ENCODE measurements at regions of chr10 and their contacts with region 1.

Region 1: DNA sequence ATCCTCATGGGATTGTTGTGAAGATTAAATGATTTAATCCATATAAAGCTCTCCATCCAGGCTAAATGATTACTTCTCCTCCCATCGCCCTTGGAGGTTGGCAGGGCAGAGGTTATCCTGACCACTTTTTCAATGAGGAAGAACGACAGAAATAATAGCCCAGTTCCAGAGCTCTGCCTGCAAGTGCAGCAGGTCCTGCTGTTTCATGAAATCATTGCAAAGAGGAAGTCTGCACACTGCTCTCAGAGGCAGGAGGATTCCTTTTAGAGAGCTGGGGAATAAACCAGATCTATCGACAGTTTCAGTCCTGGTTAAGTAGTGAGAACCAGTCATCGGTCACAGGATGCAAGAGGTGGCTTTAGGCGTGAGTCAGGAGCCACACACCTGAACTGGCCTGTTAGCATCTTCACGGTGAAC is 25.0 kb upstream of the CDH23 start:
- DNase-seq: no peak
- H3K4me3 ChIP-seq: no peak overlapping the region
- H3K27ac ChIP-seq: no peak overlapping the region
- H3K4me1 ChIP-seq: peaks cover 4 to 19% (median 10%) of the 10 kb centered on the region in 4 donors
- H3K27me3 ChIP-seq: no peaks in the 10 kb centered on the region
- CTCF ChIP-seq: no peak
- EP300 ChIP-seq: no peak
- POLR2A ChIP-seq: no peak

Region 2: GRCh38 chr10:70672165-70673042 is 699.4 kb before region 1 on chr10 and contains the start of gene ADAMTS14:
- intact Hi-C with region 1: no loop called
- DNase-seq: peak in 1 of 2 donors; percentile 83
- H3K4me3 ChIP-seq: peak within 1 kb of the TSS; percentile 41 to 51 (median 46)
- H3K27ac ChIP-seq: peak within 1 kb of the TSS in 4 of 5 donors; percentile 26 to 73 (median 55)
- H3K4me1 ChIP-seq: peaks cover 0 to 29% (median 16%) of the 10 kb centered on the region in 4 donors
- H3K27me3 ChIP-seq: peaks cover 5 to 54% (median 23%) of the 10 kb centered on the region in 3 donors
- CTCF ChIP-seq: no peak
- EP300 ChIP-seq: no peak
- POLR2A ChIP-seq: no peak
- total RNA-seq, gene ADAMTS14: 7.0 to 9.4 (median 7.3) TPM in 3 of 5 donors, not detected in the others

Region 3: GRCh38 chr10:71143610-71144009 is 228.1 kb before region 1 on chr10:
- intact Hi-C with region 1: no loop called
- DNase-seq: no peak
- H3K4me3 ChIP-seq: no peak overlapping the region
- H3K27ac ChIP-seq: no peak overlapping the region
- H3K4me1 ChIP-seq: no peaks in the 10 kb centered on the region
- H3K27me3 ChIP-seq: no peaks in the 10 kb centered on the region
- CTCF ChIP-seq: no peak
- EP300 ChIP-seq: no peak
- POLR2A ChIP-seq: no peak

Region 4: GRCh38 chr10:71323407-71323806 is 48.4 kb before region 1 on chr10:
- intact Hi-C with region 1: loop called (anchors 10 kb)
- DNase-seq: peak in 1 of 2 donors; percentile 57
- H3K4me3 ChIP-seq: no peak overlapping the region
- H3K27ac ChIP-seq: no peak overlapping the region
- H3K4me1 ChIP-seq: peaks cover 8 to 33% (median 20%) of the 10 kb centered on the region in 4 donors
- H3K27me3 ChIP-seq: no peaks in the 10 kb centered on the region
- CTCF ChIP-seq: no peak
- EP300 ChIP-seq: no peak
- POLR2A ChIP-seq: no peak

Region 5: DNA sequence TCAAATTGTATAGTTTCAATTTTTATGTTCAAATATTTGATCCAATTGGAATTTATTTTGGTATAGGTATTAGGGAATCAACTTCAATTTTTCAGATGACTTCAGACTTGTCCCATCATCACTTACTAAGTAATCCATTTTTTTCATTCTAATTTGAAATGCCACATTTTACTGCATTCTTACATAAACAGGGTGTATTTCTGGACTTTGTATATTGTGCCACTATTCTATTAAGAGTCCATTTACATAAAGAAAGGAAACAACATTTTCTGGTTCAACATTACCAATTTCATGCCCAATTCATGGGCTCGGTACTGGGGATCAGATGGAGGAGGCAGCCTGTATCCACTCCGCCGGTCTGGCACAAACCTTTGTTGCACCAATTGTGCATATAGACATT is 1780.3 kb after region 1 on chr10:
- intact Hi-C with region 1: no loop called
- DNase-seq: no peak
- H3K4me3 ChIP-seq: no peak overlapping the region
- H3K27ac ChIP-seq: no peak overlapping the region
- H3K4me1 ChIP-seq: no peaks in the 10 kb centered on the region
- H3K27me3 ChIP-seq: no peaks in the 10 kb centered on the region
- CTCF ChIP-seq: no peak
- EP300 ChIP-seq: no peak
- POLR2A ChIP-seq: no peak

Measured in stomach (tissue), 19 donors.